Endothelial cell of umbilical vein (primary cell): ENCODE measurements at regions of chr2 and their contacts with region 1.

Region 1: GRCh38 chr2:27566628-27567027 is 16.2 kb upstream of the ZNF512 start:
- DNase-seq: peak; percentile 82
- H3K4me3 ChIP-seq: peak overlapping the region in 1 of 3 experiments; percentile 1
- H3K27ac ChIP-seq: peak overlapping the region; percentile 81
- H3K4me1 ChIP-seq: peaks cover 30% of the 10 kb centered on the region
- H3K27me3 ChIP-seq: no peaks in the 10 kb centered on the region
- CTCF ChIP-seq: no peak
- POLR2A ChIP-seq: no peak

Region 2: DNA sequence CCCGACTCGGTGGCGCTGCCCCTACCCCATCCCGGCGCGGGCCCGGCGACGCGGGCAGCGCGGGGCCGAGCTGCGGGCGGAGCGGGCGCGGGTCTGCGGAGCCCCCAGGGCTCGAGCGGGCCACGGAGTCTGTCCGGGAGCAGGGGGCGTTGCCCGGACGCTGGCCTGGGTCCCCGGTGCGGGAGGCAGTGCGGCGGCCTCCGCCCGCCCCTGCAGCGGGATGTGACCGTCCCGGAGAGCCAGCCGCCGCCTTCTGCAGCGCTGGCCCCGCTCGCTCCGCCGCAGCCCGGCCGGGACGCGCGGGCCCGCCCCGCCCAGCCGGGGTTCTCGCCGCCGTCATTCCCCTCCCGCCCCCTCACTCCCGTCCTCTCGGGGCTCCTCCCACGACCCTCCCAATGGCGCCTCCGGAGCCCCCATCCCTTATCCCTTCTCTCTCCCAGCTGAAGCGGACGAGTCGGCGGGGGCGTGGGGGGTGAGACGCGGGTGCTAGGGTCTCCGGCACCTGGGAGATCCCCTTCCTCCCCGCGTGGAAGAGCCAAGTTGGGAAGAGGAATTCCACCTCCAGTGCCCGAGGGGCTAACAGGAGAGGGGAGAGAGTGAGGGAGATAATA is 71.6 kb before region 1 on chr2 and contains the start of gene FNDC4:
- CTCF ChIA-PET with region 1: no interaction called
- POLR2A ChIA-PET with region 1: no interaction called
- dilution Hi-C with region 1: no loop called
- intact Hi-C with region 1: loop called (anchors 2 kb)
- DNase-seq: peak; percentile 37
- H3K4me3 ChIP-seq: peak within 1 kb of the TSS; percentile 78 to 89 (median 85)
- H3K27ac ChIP-seq: peak within 1 kb of the TSS; percentile 8
- H3K4me1 ChIP-seq: peaks cover 18% of the 10 kb centered on the region
- H3K27me3 ChIP-seq: no peaks in the 10 kb centered on the region
- CTCF ChIP-seq: no peak
- POLR2A ChIP-seq: peak; percentile 73
- total RNA-seq, gene FNDC4: 15.5 and 20.0 TPM in 2 replicates